ENCODE measurements at regions of chr7 and their contacts with region 1.

Region 1: GRCh38 chr7:16369855-16370254 is 51.5 kb downstream of the CRPPA start:
- DNase-seq: no peak
- H3K4me3 Mint-ChIP-seq: no peak overlapping the region
- H3K27ac Mint-ChIP-seq: no peak overlapping the region
- H3K4me1 Mint-ChIP-seq: no peaks in the 10 kb centered on the region
- H3K27me3 Mint-ChIP-seq: no peaks in the 10 kb centered on the region

Region 2: DNA sequence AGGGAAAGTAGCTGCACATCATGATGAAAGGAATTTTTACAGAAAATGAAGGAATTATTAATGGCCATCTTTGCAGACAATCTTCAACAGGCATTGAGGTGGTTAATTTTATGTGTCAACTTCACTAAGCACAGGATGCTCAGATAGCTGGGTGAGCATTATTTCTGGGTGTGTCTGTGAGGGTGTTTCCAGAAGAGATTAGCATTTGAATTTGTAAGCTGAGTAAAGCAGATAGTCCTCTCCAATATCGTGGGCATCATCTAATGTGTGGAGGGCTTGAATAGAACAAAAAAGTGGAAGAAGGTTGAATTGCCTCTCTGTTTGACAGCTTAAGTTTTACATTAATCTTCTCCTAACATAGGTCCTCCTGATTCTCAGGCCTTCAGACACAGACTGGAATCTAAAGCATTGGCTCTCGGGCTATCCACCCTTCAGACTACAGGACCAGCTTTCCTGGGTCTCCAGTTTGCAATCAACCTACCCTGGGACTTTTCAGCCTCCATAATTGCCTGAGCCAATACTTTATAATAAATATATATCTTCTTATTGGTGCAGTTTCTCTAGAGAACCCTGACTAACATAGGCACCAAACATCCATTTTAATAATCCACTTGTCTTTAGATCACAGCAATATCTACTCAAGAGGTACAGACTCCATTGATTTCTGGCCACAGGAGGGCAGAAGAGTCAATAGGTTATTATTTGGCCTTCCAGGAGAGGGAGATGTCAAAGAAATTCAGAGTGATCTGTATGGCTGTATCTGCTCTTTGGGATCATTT is 62.0 kb after region 1 on chr7:
- intact Hi-C with region 1: loop called (anchors 10 kb)
- DNase-seq: peak; percentile 72
- H3K4me3 Mint-ChIP-seq: no peak overlapping the region
- H3K27ac Mint-ChIP-seq: no peak overlapping the region
- H3K4me1 Mint-ChIP-seq: peaks cover 5% of the 10 kb centered on the region
- H3K27me3 Mint-ChIP-seq: peaks cover 3% of the 10 kb centered on the region

Measured in activated CD4-positive, alpha-beta T cell treated with anti-CD3 and anti-CD28 coated beads, Interleukin-2, amount 10 ng/mL, durations not matched to agents 24 days and 14 days (primary cell).